SK-N-SH (cell line): ENCODE measurements at regions of chr7 and their contacts with region 1.

Region 1: GRCh38 chr7:26365077-26365900 is 73.6 kb downstream of the SNX10 start:
- DNase-seq: peak; percentile 60
- H3K4me3 ChIP-seq: no peak overlapping the region
- H3K27ac ChIP-seq: no peak overlapping the region
- H3K4me1 ChIP-seq: peaks cover 0 to 9% of the 10 kb centered on the region in 2 experiments; a peak in 2 of 4 replicates
- H3K27me3 ChIP-seq: peaks cover 22% of the 10 kb centered on the region; the same call in 1 of the 2 replicates
- CTCF ChIP-seq: peak; percentile 94
- EP300 ChIP-seq: no peak
- RAD21 ChIP-seq: peak; percentile 100

Region 2: DNA sequence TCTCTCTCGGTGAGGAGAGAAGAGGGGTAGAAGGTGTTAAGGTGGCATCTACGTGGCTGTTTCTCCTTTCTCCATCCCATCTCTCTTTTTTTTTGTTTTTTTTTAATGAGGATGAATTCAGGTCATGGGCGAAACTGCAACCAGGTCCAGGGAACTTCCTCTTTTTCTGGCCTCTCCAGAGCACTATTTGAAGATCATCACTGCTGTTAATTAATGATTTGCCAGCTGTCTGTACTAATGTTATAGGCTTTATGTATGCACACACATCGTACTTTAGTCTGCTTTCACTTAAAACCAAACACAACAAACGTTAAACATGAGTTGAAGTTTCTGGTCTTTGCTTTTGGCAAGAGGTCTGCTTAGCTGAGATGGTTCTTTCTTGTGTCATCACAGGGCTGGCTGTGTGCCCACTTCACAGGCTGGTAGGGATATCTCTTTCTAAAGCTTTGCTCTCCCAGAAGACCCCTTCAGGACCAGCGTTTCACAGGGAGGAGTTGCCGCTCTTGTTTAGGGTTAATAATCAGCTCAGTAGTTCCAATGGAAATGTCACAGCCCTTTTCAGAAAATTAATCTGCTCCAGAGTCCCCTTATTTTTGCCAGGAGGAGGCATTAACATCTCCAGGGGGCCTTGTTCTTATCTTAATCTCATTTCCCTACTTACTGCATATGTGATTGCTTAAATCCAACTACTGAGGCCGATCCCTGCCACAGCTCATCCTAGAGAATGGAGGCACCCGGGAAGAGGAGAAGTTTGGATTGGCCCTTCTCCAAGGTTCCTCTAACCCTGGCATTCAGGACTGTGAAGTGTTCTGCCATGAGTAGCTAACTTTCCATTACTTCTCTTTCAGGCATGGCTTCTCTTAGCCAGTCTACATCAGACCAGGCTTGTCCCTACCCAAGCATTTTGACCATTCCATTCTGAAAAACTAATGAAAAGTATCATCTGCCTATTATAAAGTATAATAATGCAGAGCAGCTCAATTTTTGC is 487.2 kb before region 1 on chr7:
- CTCF ChIA-PET with region 1: interaction called, 11 read pairs
- POLR2A ChIA-PET with region 1: no interaction called
- DNase-seq: no peak
- H3K4me3 ChIP-seq: no peak overlapping the region
- H3K27ac ChIP-seq: no peak overlapping the region
- H3K4me1 ChIP-seq: peaks cover 0 to 5% of the 10 kb centered on the region in 2 experiments; a peak in 1 of 4 replicates
- H3K27me3 ChIP-seq: peaks cover 32% of the 10 kb centered on the region
- CTCF ChIP-seq: no peak
- EP300 ChIP-seq: no peak
- RAD21 ChIP-seq: no peak

Region 3: DNA sequence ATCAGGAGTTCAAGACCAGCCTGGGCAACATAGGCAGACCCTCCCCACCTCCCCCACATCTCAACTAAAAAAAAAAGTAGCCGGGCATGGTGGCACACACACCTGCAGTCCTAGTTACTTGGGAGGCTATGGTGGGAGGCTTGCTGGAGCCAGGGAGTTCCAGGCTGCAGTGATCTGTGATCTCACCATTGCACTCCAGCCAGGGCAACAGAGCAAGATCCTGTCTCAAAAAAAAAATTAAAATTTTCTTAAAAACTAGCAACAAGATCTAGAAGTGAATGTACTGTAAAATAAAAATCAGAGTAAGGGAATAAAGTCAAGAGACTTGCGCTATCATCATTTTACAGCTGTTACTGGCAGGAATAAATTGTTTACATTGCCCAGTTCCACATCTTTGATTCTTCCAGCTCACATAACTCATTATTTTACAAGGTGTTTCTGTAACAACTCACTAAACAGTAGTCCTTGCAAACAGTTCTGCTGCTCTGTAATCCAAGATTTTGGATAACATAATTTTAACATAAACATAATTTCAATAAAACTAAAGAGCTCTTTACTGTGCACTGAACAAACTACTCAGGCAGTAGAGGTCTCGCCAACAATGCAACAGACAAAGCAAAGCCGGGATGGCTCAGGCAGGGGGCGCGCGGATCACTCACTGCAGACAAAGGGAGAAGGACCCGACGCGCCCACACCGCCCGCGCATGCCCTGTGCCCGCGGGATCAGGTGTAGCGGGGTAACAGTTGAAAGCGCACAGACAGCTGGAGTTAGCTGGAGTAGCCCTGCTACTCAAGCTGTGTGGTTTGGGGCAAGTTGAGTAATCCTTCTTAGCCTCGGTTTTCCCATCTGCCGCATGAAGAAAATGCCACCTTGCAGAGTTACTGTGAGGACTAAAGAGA is 286.6 kb before region 1 on chr7:
- CTCF ChIA-PET with region 1: interaction called, 363 read pairs
- POLR2A ChIA-PET with region 1: no interaction called
- DNase-seq: peak; percentile 90
- H3K4me3 ChIP-seq: peak overlapping the region in 1 of 2 experiments; percentile 19; a peak in 1 of 4 replicates
- H3K27ac ChIP-seq: no peak overlapping the region
- H3K4me1 ChIP-seq: peaks cover 3 to 7% of the 10 kb centered on the region in 2 experiments; a peak in 2 of 4 replicates
- H3K27me3 ChIP-seq: peaks cover 46% of the 10 kb centered on the region; the same call in 1 of the 2 replicates
- CTCF ChIP-seq: peak; percentile 67
- EP300 ChIP-seq: no peak
- RAD21 ChIP-seq: peak; percentile 73

Region 4: DNA sequence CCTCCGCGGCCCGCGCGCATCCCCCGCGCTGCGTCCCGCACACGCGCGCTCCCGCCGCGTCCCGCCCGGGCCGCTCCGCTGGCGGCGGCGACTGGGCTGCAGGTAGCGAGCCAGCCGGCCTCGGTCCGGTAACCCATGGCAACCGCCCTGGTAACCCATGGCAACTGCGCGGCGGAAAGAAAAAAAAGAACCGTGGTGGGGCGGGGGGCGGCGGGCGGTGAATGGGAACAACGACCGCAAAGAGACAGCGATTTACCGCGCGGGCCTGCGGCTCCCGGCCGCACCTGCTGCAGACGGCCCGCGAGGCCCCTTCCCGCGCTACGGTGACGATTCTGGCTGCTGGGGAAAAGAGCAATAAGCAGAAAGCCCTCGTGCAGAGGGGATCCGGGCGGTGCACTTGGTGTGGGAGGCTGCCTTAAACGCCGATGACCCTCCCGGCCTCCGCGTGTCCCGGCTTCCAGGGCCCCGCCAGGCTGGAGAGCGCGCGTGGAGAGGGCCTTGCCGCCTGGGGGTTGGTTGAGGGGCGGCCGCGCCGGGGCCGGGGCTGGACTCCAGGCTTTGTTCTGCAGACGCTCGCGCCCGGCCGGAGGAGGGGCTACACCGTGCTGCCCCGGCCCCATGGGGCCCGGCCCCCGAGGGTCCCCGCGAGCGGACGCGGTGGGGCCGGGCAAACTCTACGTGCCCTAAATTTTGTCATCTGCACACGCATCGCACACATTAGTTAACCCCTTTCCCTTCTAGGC is 11.1 kb after region 1 on chr7:
- CTCF ChIA-PET with region 1: interaction called, 36 read pairs
- POLR2A ChIA-PET with region 1: no interaction called
- DNase-seq: peak; percentile 94
- H3K4me3 ChIP-seq: peak overlapping the region in 1 of 2 experiments; percentile 55; a peak in 2 of 4 replicates
- H3K27ac ChIP-seq: peak overlapping the region in 1 of 2 experiments; percentile 89; a peak in 2 of 4 replicates
- H3K4me1 ChIP-seq: peaks cover 0 to 5% of the 10 kb centered on the region in 2 experiments; a peak in 2 of 4 replicates
- H3K27me3 ChIP-seq: peaks cover 38% of the 10 kb centered on the region
- CTCF ChIP-seq: no peak
- EP300 ChIP-seq: no peak
- RAD21 ChIP-seq: no peak

Region 5: DNA sequence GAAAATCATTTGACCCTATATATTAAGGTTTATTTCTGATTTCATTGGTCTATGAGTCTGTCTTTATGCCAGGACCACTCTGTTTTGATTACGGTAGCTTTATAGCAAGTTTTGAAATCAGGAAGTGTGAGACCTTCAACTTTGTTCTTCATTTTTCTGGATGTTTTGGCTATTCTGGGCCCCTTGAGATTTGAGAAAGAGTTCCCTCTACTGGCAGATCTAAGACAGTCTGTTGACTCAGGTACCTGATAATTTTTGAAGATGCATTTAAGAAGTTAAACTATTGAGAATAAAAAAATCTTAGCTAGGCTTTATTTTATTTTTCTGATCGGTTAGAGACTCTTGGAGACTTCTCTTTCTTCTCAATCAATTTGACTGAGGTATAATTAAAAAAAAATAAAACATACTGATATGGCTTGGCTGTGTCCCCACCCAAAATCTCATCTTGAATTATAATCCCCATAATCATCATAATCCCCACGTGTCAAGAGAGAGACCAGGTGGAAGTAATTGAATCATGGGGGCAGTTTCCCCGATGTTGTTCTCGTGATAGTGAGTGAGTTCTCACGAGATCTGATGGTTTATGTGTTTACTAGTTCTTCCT is 135.6 kb after region 1 on chr7:
- CTCF ChIA-PET with region 1: interaction called, 28 read pairs
- POLR2A ChIA-PET with region 1: no interaction called
- DNase-seq: peak; percentile 55
- H3K4me3 ChIP-seq: no peak overlapping the region; a peak in 1 of 4 replicates
- H3K27ac ChIP-seq: no peak overlapping the region
- H3K4me1 ChIP-seq: no peaks in the 10 kb centered on the region
- H3K27me3 ChIP-seq: no peaks in the 10 kb centered on the region; the same call in 1 of the 2 replicates
- CTCF ChIP-seq: peak; percentile 65
- EP300 ChIP-seq: no peak
- RAD21 ChIP-seq: peak; percentile 80

Region 6: DNA sequence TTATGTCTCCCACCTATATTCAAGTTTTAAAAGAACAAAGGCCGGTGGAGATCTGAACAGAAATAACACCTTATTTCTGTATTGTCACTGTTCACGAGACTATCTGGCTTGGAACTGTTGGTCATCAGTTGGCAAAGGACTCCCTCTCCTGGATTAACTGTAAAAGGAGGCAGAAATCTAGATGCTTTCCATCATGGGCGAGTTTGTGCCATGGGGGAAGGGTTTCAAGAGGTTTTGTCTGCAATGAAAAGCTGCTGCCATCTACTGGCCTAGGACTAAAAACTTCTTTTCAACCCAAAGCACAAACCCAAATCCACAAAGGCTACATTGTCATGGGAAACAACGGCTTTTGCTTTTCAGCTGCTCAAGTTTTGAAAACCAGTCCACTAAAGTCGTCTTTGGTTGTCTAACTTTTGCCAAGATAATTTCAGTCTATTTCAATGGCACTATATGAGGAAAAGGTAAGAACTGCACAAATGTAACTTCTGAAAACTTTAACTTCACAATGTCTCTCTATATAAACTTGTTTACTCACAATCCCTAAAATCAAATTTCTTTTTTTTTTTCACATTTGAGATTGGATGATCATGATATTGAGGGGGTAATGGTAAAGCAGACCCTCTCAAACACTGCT is 302.3 kb after region 1 on chr7:
- CTCF ChIA-PET with region 1: interaction called, 716 read pairs
- POLR2A ChIA-PET with region 1: interaction called, 10 read pairs
- DNase-seq: peak; percentile 71
- H3K4me3 ChIP-seq: peak overlapping the region in 1 of 2 experiments; percentile 21; a peak in 1 of 4 replicates
- H3K27ac ChIP-seq: no peak overlapping the region
- H3K4me1 ChIP-seq: peaks cover 0 to 3% of the 10 kb centered on the region in 2 experiments; a peak in 1 of 4 replicates
- H3K27me3 ChIP-seq: no peaks in the 10 kb centered on the region; the same call in 1 of the 2 replicates
- CTCF ChIP-seq: peak; percentile 98
- EP300 ChIP-seq: peak in 1 of 2 experiments; percentile 53; a peak in 1 of 4 replicates
- RAD21 ChIP-seq: peak; percentile 100